Psoas muscle (tissue), 8 donors: ENCODE measurements at regions of chr6 and their contacts with region 1.

Region 1: DNA sequence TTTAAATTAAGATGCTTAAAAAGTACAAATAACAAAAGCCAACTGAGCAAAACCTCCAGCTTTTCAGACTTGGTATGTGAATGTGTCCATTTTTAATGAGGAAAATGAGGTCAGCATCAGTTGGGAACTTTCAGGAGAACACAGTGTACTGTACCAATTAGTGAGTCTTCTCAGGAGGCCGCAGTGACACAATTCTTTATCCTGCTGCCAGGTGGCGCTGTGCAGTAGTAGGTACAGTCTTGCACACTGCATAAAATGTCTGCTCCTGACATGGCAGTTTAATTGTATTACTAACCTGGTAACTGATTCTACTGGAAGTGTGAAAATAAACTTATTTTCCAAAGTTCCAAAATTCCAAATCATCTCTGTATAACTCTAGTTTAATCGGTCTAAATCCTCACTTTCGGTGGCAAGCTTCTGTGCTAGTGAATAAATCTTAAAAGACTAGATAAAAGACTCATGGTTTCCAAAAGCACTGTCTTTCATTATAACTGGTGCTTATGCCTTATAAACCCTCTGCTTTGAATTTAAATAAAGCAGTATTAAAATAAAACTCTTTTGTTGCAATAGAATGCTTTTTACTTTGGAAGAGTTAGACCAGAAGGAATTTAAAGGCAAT is 214.8 kb upstream of the MMS22L start:
- DNase-seq: peak; percentile 48 to 76
- ATAC-seq: peak; percentile 73 to 97 (median 91)
- H3K4me3 ChIP-seq: no peak overlapping the region
- H3K27ac ChIP-seq: no peak overlapping the region
- H3K4me1 ChIP-seq: no peaks in the 10 kb centered on the region
- H3K27me3 ChIP-seq: no peaks in the 10 kb centered on the region
- CTCF ChIP-seq: peak; percentile 81

Region 2: GRCh38 chr6:97548354-97548753 is 50.5 kb after region 1 on chr6:
- intact Hi-C with region 1: no loop called
- DNase-seq: no peak
- ATAC-seq: no peak
- H3K4me3 ChIP-seq: no peak overlapping the region
- H3K27ac ChIP-seq: no peak overlapping the region
- H3K4me1 ChIP-seq: no peaks in the 10 kb centered on the region
- H3K27me3 ChIP-seq: no peaks in the 10 kb centered on the region
- CTCF ChIP-seq: no peak

Region 3: GRCh38 chr6:98039869-98040607 is 542.2 kb after region 1 on chr6:
- intact Hi-C with region 1: loop called in 1 of 2 experiments (anchors 10 kb)
- DNase-seq: no peak
- ATAC-seq: no peak
- H3K4me3 ChIP-seq: no peak overlapping the region
- H3K27ac ChIP-seq: no peak overlapping the region
- H3K4me1 ChIP-seq: no peaks in the 10 kb centered on the region
- H3K27me3 ChIP-seq: peaks cover 0 to 3% (median 2%) of the 10 kb centered on the region in 3 donors
- CTCF ChIP-seq: no peak

Region 4: DNA sequence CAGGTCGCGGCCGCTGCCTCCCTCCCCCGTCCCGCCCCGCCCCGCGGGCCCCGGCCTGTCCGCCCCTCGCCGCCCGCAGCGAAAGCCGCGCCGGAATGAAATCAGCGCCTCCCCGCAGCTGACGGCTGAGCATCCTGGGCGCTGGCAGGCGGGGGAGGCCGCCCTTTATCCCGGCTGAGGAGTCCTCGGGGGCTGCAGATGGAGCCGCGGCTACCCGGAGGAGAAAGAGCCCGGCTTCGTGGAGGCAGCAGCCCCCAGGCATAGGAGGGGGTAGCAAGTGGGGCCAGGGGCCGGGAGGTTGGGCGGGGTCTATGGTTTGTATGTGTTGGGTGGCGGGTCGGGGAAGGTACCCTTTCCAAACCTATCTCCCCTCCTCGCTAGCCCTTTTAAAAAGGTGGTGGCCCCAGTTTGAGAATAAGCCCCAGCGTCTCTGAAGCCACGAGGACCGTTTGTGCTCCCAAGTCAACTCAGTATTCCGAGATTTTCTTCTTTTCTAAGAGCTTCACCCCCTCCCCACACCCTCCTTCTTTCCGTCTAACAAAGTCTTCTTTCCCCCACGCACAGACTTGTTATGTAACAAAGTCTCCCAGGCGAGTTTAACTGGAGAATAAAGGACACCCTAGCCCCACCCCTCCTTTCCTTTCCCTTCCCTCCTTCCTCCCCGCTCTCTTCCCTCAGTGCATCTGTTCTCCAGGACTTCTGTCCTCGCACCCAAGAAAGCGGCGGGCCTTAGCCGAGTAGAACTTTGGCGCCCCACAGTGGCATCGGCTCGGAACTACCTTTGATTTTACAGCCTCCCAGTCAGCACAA is 1347.6 kb after region 1 on chr6:
- intact Hi-C with region 1: loop called in 1 of 2 experiments (anchors 5 kb)
- DNase-seq: peak; percentile 62 to 79
- ATAC-seq: peak; percentile 66 to 83 (median 76)
- H3K4me3 ChIP-seq: peak overlapping the region; percentile 44
- H3K27ac ChIP-seq: no peak overlapping the region
- H3K4me1 ChIP-seq: peaks cover 5% of the 10 kb centered on the region
- H3K27me3 ChIP-seq: peaks cover 3 to 99% (median 35%) of the 10 kb centered on the region in 3 donors
- CTCF ChIP-seq: peak; percentile 77

Region 5: DNA sequence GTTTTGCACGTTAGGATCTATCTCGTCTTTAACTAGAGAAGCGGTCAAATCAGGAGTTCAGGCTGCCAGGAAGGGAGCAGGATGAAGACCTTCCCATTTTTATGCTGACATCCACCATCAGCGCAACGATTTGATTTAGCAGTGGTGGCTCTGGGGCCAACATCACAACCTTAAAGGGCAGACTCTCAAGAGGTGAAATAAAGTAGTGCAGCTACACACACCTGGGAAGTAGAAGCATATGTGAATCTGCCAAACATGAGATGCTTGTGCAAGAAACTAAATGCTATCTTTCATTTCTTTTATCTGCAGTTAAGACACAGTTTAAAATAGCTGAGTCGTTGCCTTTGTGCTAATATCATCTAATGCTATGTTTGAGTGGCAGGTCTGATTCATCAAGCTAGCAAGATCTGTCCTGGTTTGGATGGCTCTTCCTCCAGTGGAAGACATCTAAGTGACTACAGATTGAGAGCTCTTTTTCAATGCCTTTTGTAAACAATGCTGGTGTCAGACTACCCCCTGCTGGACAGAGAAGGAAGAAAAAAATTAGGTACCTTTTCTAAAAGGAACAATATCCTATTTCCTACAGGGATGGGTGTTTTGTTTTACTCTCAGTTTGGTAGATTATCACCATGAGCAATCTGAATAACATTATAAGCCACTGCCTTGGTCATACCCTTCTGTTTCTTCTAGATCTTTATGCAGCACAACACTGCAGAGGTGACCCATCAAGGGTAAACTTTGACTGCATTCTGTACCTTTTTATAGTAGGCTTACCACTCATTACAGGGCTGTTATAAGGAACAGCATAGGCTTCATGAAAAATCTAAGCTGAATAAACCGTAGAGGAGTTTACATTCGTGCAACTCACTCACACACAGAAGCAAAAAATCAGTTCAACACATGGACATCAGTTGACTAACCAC is 1621.5 kb after region 1 on chr6:
- intact Hi-C with region 1: loop called in 1 of 2 experiments (anchors 10 kb)
- DNase-seq: no peak
- ATAC-seq: peak in 3 of 4 donors; percentile 49 to 72 (median 60)
- H3K4me3 ChIP-seq: no peak overlapping the region
- H3K27ac ChIP-seq: no peak overlapping the region
- H3K4me1 ChIP-seq: no peaks in the 10 kb centered on the region
- H3K27me3 ChIP-seq: peaks cover 2 to 10% (median 3%) of the 10 kb centered on the region in 3 donors
- CTCF ChIP-seq: peak; percentile 78